ENCODE measurements at regions of chrX and their contacts with region 1.

Region 1: DNA sequence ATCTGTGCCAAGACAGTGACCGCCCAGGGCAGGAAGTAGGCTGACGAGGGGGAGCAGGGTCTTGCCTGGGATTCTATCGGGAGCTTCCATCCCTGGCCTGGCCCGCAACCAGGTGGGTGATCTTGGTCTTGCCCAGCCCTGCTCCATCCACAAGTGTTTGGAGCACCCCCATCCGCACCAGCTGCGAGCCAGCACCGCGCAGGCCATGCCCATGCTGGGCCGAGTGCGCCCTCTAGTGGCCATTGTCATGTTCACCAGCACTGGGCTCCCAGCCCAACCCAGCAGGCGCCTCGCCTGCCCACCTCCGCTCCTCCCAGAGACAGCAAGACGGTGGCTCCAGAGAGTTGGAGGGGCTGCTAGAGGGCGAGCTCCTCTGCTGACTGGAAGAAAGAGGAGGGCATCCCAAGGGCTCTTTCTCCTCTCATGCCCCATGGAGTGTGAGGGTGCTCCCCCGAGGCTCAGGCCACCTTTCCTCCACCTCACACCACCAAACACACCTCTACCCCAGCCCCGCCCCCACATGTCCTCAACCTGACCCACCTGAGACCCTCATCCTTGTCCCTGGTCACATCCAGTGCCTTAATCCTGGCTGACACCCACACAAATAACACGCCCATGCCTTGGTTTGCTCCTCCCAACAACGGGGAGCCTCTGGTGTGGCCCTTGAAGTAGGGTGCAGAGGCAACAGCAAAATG is 9.8 kb upstream of the ATP2B3 start:
- DNase-seq: peak; percentile 82 to 89 (median 88)
- ATAC-seq: peak; percentile 99
- H3K4me3 ChIP-seq: no peak overlapping the region
- H3K27ac ChIP-seq: no peak overlapping the region
- H3K4me1 ChIP-seq: peaks cover 0 to 30% of the 10 kb centered on the region in 2 experiments; a peak in 3 of 5 replicates
- H3K27me3 ChIP-seq: peaks cover 0 to 36% of the 10 kb centered on the region in 2 experiments; a peak in 2 of 5 replicates
- CTCF ChIP-seq: peak; percentile 87 to 96 (median 93)
- EP300 ChIP-seq: no peak
- POLR2A ChIP-seq: no peak
- RAD21 ChIP-seq: peak; percentile 76 to 89

Region 2: GRCh38 chrX:152821145-152821765 is 686.4 kb before region 1 on chrX:
- CTCF ChIA-PET with region 1: no interaction called
- POLR2A ChIA-PET with region 1: no interaction called
- in situ Hi-C with region 1: no loop called
- intact Hi-C with region 1: no loop called
- DNase-seq: peak; percentile 45 to 57 (median 52)
- ATAC-seq: peak; percentile 68
- H3K4me3 ChIP-seq: no peak overlapping the region
- H3K27ac ChIP-seq: no peak overlapping the region
- H3K4me1 ChIP-seq: peaks cover 0 to 8% of the 10 kb centered on the region in 2 experiments; a peak in 2 of 5 replicates
- H3K27me3 ChIP-seq: peaks cover 3 to 13% of the 10 kb centered on the region in 2 experiments; a peak in 4 of 5 replicates
- CTCF ChIP-seq: peak; percentile 76 to 80 (median 77)
- EP300 ChIP-seq: no peak
- POLR2A ChIP-seq: no peak
- RAD21 ChIP-seq: peak; percentile 52 to 66

Region 3: DNA sequence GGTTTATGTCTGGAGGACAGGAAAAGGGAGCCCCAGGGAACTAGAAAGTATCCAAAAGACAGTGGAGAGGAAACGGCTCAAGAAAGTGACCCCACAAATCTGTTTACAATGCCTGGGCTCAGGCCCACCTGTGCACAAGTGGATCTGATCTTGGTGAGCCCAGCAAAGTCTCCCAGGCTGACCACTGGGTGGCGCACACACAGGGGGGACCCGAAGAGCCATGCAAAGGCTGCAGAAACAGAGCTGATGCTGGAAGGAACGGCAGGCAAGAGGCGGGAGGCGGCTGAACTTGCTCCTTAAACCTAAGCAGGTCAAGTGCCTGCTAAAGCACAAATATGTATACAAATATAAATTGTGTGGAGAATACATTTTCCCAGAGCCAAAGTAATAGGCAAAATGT is 46.8 kb before region 1 on chrX:
- CTCF ChIA-PET with region 1: interaction called, 9 read pairs
- POLR2A ChIA-PET with region 1: no interaction called
- in situ Hi-C with region 1: no loop called
- intact Hi-C with region 1: loop called (anchors 1 kb)
- DNase-seq: peak; percentile 48 to 63 (median 54)
- ATAC-seq: peak; percentile 97
- H3K4me3 ChIP-seq: no peak overlapping the region
- H3K27ac ChIP-seq: no peak overlapping the region
- H3K4me1 ChIP-seq: peaks cover 0 to 5% of the 10 kb centered on the region in 2 experiments; a peak in 1 of 5 replicates
- H3K27me3 ChIP-seq: no peaks in the 10 kb centered on the region
- CTCF ChIP-seq: peak; percentile 66 to 83 (median 74)
- EP300 ChIP-seq: no peak
- POLR2A ChIP-seq: no peak
- RAD21 ChIP-seq: peak in 1 of 2 experiments; percentile 46; a peak in 2 of 4 replicates

Region 4: GRCh38 chrX:153470435-153471363 is 36.9 kb before region 1 on chrX and contains the start of gene HAUS7:
- CTCF ChIA-PET with region 1: interaction called, 9 read pairs
- POLR2A ChIA-PET with region 1: interaction called, 5 read pairs
- in situ Hi-C with region 1: no loop called
- intact Hi-C with region 1: loop called (anchors 5 kb)
- DNase-seq: peak; percentile 91 to 97 (median 93)
- ATAC-seq: peak; percentile 92
- H3K4me3 ChIP-seq: peak within 1 kb of the TSS; percentile 92
- H3K27ac ChIP-seq: peak within 1 kb of the TSS; percentile 77
- H3K4me1 ChIP-seq: peaks cover 4 to 54% of the 10 kb centered on the region in 2 experiments; a peak in 4 of 5 replicates
- H3K27me3 ChIP-seq: no peaks in the 10 kb centered on the region
- CTCF ChIP-seq: peak; percentile 84 to 99 (median 99)
- EP300 ChIP-seq: no peak
- POLR2A ChIP-seq: peak; percentile 67
- RAD21 ChIP-seq: peak; percentile 40 to 75; a peak in 3 of 4 replicates
- polyA plus RNA-seq, gene HAUS7: 10.0 to 26.1 TPM

Measured in K562 (cell line).